Psoas muscle (tissue), 8 donors: ENCODE measurements at regions of chr3 and their contacts with region 1.

Region 1: GRCh38 chr3:52339612-52340011 is 23.5 kb downstream of the DNAH1 start:
- DNase-seq: peak in 1 of 2 donors; percentile 27
- ATAC-seq: peak; percentile 60 to 89 (median 70)
- H3K4me3 ChIP-seq: no peak overlapping the region
- H3K27ac ChIP-seq: no peak overlapping the region
- H3K4me1 ChIP-seq: no peaks in the 10 kb centered on the region
- H3K27me3 ChIP-seq: no peaks in the 10 kb centered on the region
- CTCF ChIP-seq: peak; percentile 69

Region 2: GRCh38 chr3:52001443-52001974 is 338.1 kb before region 1 on chr3:
- intact Hi-C with region 1: loop called in 1 of 2 experiments (anchors 10 kb)
- DNase-seq: peak; percentile 77 to 89
- ATAC-seq: peak; percentile 81 to 86 (median 84)
- H3K4me3 ChIP-seq: no peak overlapping the region
- H3K27ac ChIP-seq: no peak overlapping the region
- H3K4me1 ChIP-seq: peaks cover 26% of the 10 kb centered on the region
- H3K27me3 ChIP-seq: no peaks in the 10 kb centered on the region
- CTCF ChIP-seq: peak; percentile 92

Region 3: GRCh38 chr3:52220380-52221026 is 119.1 kb before region 1 on chr3:
- intact Hi-C with region 1: loop called in 1 of 2 experiments (anchors 2 kb)
- DNase-seq: peak; percentile 86 to 93
- ATAC-seq: peak; percentile 68 to 78 (median 70)
- H3K4me3 ChIP-seq: no peak overlapping the region
- H3K27ac ChIP-seq: no peak overlapping the region
- H3K4me1 ChIP-seq: peaks cover 25% of the 10 kb centered on the region
- H3K27me3 ChIP-seq: no peaks in the 10 kb centered on the region
- CTCF ChIP-seq: peak; percentile 87

Region 4: GRCh38 chr3:52231502-52232293 is 107.9 kb before region 1 on chr3:
- intact Hi-C with region 1: loop called (anchors 1 to 2 kb)
- DNase-seq: peak; percentile 86 to 95
- ATAC-seq: peak; percentile 59 to 69 (median 66)
- H3K4me3 ChIP-seq: peak overlapping the region; percentile 72
- H3K27ac ChIP-seq: peak overlapping the region; percentile 46
- H3K4me1 ChIP-seq: peaks cover 34% of the 10 kb centered on the region
- H3K27me3 ChIP-seq: no peaks in the 10 kb centered on the region
- CTCF ChIP-seq: peak; percentile 95

Region 5: DNA sequence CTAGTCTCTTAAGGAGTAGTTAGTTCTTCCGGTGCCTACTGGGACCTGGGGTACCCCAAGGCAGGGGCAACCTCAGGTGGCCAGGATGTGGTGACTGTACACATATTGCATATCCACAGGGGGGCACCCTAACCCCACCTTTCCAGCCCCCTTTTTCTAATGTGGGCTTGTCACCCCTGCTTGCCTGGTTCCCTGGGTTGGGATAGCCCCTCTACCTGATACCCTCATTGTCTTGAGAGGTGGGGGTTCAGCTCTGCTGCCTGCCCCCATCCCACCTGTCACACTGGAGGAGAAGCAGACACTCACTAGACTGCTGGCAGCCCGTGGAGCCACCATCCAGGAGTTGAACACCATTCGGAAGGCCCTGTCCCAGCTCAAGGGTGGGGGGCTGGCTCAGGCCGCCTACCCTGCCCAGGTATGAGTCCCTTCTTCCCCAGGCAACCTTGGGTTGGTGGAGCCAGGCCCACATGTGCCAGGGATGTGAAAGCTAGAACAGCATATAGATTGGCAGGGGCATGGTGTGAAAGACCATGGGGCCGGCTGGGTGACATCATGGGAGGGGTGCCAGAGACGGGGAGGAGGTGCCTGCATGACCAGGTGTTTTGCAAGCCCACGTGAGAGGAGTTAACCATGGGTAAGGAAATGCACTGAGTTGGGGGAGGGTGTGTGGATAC is 48.0 kb before region 1 on chr3:
- intact Hi-C with region 1: loop called (anchors 2 to 5 kb)
- DNase-seq: no peak
- ATAC-seq: no peak
- H3K4me3 ChIP-seq: no peak overlapping the region
- H3K27ac ChIP-seq: no peak overlapping the region
- H3K4me1 ChIP-seq: peaks cover 14% of the 10 kb centered on the region
- H3K27me3 ChIP-seq: no peaks in the 10 kb centered on the region
- CTCF ChIP-seq: peak; percentile 27

Region 6: DNA sequence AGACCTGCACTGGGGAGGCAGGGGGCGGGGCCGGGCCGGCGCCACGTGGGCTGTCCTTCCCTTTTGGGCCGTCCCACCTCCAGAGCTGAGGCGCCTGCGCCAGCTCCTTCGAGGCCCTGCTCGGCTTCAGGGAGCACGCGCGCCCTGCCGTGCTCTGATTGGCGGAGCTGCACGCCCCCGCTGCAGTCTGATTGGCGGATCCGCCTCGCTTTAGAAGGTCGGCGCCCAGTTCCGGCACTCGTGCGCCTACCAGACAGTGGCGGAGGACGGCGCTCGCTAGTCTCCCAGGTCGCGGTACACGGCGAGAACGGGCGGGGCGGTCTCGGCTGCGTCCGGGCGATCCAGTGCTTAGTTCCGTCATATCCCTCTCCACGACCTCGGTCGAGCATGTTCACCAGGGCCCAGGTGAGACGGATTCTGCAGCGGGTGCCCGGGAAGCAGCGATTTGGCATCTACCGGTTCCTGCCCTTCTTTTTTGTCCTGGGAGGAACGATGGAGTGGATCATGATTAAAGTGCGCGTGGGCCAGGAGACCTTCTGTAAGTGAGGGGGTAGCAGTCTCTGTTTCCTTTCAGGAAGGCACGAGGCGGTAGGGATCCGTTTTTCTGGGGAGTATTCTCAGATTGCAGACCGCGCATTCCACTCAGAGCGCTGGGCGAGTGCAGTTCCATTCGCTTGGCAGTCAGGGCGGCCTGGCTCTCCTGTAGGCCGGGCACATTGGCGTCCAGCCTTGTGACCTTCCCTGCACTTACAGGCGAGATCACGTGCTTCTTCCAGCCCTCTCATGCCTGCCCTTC is 197.0 kb after region 1 on chr3 and contains the start of gene UQCC5:
- intact Hi-C with region 1: no loop called
- DNase-seq: peak; percentile 98 to 99
- ATAC-seq: peak; percentile 91 to 94 (median 93)
- H3K4me3 ChIP-seq: peak within 1 kb of the TSS; percentile 83
- H3K27ac ChIP-seq: peak within 1 kb of the TSS; percentile 96
- H3K4me1 ChIP-seq: peaks cover 33% of the 10 kb centered on the region
- H3K27me3 ChIP-seq: no peaks in the 10 kb centered on the region
- CTCF ChIP-seq: no peak
- total RNA-seq, gene UQCC5: 29.5 to 32.7 (median 31.0) TPM